ENCODE measurements at regions of chr19 and their contacts with region 1.

Region 1: DNA sequence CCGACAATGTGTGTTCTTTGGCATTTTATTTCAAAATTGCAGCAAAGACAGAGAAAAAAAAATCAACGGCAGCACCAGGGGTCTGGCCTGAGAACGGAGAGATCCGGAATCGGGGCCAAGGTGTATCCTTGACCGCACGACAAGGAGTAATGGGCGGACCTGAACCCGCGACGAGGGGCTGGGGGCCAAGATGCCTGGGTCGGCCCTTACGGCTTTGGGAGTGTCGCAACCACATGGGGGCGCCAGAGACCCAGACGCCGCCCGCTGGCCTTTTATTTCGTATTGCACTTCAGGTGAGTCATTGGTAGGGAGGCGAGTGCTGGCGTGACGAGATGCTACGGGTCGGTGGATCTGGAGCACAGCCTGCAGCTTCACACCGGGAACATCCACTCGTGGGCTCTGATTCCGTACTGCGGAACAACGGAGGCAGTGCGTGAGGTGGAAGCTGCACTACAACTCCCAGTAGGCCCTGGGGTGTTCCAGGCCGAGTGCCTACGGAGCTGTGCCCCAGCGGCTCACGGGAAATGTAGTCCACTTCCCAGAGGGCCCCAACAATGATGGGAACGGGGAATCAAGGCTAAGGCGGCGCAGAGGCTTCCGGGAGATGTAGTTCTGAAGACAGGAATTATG is 15.7 kb downstream of the BCAT2 start:
- DNase-seq: peak; percentile 98
- H3K4me3 ChIP-seq: peak overlapping the region; percentile 55
- H3K27ac ChIP-seq: no peak overlapping the region
- H3K4me1 ChIP-seq: peaks cover 10% of the 10 kb centered on the region
- H3K27me3 ChIP-seq: no peaks in the 10 kb centered on the region
- CTCF ChIP-seq: peak; percentile 99

Region 2: DNA sequence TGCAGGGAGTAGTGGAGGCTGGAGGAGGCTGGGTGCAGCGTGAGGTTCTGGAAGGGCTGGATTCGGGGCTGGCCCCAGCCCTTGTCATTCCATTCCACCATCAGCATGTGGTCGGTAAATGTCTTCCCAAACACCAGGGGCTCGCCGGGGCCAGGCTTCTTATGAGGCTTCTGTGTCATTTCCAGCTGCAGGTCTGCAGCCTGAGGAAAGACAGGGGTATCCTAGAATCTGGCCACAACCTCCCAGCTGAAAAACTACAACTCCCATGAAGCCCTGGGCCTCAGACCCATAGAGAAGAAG is 11.3 kb after region 1 on chr19:
- CTCF ChIA-PET with region 1: interaction called, 10 read pairs
- POLR2A ChIA-PET with region 1: no interaction called
- intact Hi-C with region 1: no loop called
- DNase-seq: no peak
- H3K4me3 ChIP-seq: no peak overlapping the region
- H3K27ac ChIP-seq: no peak overlapping the region
- H3K4me1 ChIP-seq: peaks cover 3% of the 10 kb centered on the region
- H3K27me3 ChIP-seq: no peaks in the 10 kb centered on the region
- CTCF ChIP-seq: no peak

Region 3: GRCh38 chr19:48835734-48836088 is 40.5 kb after region 1 on chr19:
- CTCF ChIA-PET with region 1: interaction called, 16 read pairs
- POLR2A ChIA-PET with region 1: no interaction called
- intact Hi-C with region 1: no loop called
- DNase-seq: peak; percentile 88
- H3K4me3 ChIP-seq: peak overlapping the region; percentile 41
- H3K27ac ChIP-seq: no peak overlapping the region
- H3K4me1 ChIP-seq: peaks cover 13% of the 10 kb centered on the region
- H3K27me3 ChIP-seq: no peaks in the 10 kb centered on the region
- CTCF ChIP-seq: peak; percentile 95

Region 4: GRCh38 chr19:48842789-48843162 is 47.6 kb after region 1 on chr19:
- CTCF ChIA-PET with region 1: interaction called, 19 read pairs
- POLR2A ChIA-PET with region 1: no interaction called
- intact Hi-C with region 1: no loop called
- DNase-seq: peak; percentile 70
- H3K4me3 ChIP-seq: no peak overlapping the region
- H3K27ac ChIP-seq: no peak overlapping the region
- H3K4me1 ChIP-seq: no peaks in the 10 kb centered on the region
- H3K27me3 ChIP-seq: no peaks in the 10 kb centered on the region
- CTCF ChIP-seq: peak; percentile 90

Region 5: DNA sequence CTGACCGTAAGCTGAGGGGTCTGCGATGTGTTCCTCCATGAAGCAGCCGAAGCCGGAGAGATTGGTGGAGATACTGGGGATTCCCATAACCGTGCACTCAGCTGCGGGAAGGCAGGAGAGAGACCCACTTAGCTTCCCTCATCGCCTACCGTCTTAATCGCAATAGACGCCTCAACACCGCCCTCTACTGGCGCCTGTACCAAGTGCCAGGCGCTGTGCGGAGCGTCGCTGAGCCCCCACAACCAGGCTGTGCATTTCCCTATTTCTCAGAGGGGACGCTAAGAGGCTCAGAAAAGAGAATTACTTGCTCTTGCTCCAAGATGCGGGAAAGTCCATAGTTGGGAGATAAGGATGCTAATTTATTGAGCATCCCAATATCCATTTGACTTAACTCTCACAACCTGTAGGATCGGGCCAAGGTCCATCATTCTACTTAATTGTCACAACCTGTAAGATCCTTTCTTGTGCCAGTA is 175.8 kb after region 1 on chr19:
- CTCF ChIA-PET with region 1: interaction called, 32 read pairs
- POLR2A ChIA-PET with region 1: no interaction called
- intact Hi-C with region 1: no loop called
- DNase-seq: peak; percentile 92
- H3K4me3 ChIP-seq: no peak overlapping the region
- H3K27ac ChIP-seq: no peak overlapping the region
- H3K4me1 ChIP-seq: peaks cover 29% of the 10 kb centered on the region
- H3K27me3 ChIP-seq: no peaks in the 10 kb centered on the region
- CTCF ChIP-seq: peak; percentile 96

Region 6: DNA sequence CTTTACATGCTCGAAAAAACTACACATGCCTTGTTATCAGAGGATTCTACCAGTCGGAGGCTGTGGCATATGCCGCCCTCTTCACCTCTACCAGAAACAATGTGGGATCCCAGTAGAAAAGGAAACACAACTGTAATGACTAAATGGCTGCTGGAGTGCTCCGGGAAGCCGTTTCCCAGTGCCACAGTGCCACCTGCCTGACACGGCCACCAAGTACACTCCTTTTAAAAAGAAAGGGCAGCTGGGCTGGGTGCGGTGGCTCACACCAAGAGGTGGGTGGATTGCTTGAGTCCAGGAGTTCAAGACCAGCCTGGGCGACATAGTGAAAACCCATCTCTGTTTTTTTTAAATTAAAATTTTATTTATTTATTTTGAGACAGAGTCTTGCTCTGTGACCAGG is 429.7 kb after region 1 on chr19:
- CTCF ChIA-PET with region 1: interaction called, 3 read pairs
- POLR2A ChIA-PET with region 1: no interaction called
- intact Hi-C with region 1: loop called (anchors 10 kb)
- DNase-seq: peak; percentile 91
- H3K4me3 ChIP-seq: no peak overlapping the region
- H3K27ac ChIP-seq: peak overlapping the region; percentile 22
- H3K4me1 ChIP-seq: peaks cover 25% of the 10 kb centered on the region
- H3K27me3 ChIP-seq: no peaks in the 10 kb centered on the region
- CTCF ChIP-seq: peak; percentile 82